HEK293 (cell line): ENCODE measurements at regions of chr19 and their contacts with region 1.

Region 1: GRCh38 chr19:49468746-49469447 is 5.1 kb upstream of the FLT3LG start:
- H3K4me3 ChIP-seq: no peak overlapping the region
- H3K27ac ChIP-seq: peak overlapping the region; percentile 40; the same call in 1 of the 2 replicates
- H3K4me1 ChIP-seq: 0 out of 2 replicates have a peak, but pooled peaks cover 5% of the 10 kb centered on the region
- CTCF ChIP-seq: no peak

Region 2: DNA sequence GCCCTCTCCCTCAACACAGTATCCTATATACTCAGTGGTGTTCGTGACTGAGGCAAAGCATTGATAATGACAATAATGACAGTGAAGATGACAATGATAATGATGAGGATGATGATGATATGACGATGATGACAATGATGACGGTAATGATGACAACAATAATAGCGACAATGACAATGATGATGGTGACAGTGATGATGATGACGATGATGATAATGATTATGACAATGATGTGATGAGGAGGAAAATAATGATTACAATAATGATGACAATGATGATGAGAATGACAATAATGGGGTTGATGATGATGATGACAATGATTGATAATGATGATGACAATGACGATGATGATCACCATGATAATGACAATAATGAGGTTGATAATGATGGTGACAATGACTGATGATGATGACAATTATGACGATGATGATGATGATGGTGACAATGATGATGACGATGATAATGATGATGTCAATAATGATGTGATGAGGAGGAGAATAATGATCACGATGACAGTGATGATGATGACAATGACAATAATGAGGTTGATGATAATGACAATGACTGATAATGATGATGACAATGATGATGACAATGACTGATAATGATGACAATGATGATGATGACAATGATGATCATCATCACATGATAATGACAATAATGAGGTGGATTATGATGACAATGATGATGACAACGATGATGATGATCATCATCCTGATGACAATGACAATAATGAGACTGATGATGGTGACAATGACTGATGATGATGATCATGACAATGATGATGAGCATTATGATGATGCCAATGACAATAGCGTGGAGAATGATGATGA is 1457.7 kb before region 1 on chr19:
- CTCF ChIA-PET with region 1: interaction called, 10 read pairs
- POLR2A ChIA-PET with region 1: no interaction called
- H3K4me3 ChIP-seq: no peak overlapping the region
- H3K27ac ChIP-seq: no peak overlapping the region
- H3K4me1 ChIP-seq: no peaks in the 10 kb centered on the region
- CTCF ChIP-seq: no peak

Region 3: DNA sequence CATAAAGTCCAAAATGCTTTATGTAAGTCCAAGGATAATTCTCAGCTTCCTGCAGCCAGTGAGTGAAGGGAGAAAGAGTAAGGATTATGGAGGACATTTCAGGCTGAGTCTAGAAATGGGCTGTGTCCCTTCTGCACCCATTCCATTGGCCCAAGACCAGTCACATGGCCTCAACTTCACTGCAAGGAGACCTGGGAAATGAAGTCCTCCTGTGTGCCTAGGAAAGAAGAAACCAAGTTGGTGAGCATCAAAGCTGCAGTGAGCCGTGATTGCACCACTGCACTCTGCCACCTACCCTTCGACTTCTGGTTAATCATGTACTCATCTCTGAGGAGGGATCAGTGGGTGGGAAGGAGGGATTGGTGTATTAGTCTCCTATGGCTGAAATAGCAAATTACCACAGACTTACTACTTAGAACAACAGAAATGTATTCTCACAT is 137.3 kb before region 1 on chr19:
- CTCF ChIA-PET with region 1: no interaction called
- POLR2A ChIA-PET with region 1: no interaction called
- H3K4me3 ChIP-seq: no peak overlapping the region
- H3K27ac ChIP-seq: no peak overlapping the region
- H3K4me1 ChIP-seq: no peaks in the 10 kb centered on the region
- CTCF ChIP-seq: no peak